CD4-positive, alpha-beta T cell (primary cell): ENCODE measurements at regions of chr16 and their contacts with region 1.

Region 1: DNA sequence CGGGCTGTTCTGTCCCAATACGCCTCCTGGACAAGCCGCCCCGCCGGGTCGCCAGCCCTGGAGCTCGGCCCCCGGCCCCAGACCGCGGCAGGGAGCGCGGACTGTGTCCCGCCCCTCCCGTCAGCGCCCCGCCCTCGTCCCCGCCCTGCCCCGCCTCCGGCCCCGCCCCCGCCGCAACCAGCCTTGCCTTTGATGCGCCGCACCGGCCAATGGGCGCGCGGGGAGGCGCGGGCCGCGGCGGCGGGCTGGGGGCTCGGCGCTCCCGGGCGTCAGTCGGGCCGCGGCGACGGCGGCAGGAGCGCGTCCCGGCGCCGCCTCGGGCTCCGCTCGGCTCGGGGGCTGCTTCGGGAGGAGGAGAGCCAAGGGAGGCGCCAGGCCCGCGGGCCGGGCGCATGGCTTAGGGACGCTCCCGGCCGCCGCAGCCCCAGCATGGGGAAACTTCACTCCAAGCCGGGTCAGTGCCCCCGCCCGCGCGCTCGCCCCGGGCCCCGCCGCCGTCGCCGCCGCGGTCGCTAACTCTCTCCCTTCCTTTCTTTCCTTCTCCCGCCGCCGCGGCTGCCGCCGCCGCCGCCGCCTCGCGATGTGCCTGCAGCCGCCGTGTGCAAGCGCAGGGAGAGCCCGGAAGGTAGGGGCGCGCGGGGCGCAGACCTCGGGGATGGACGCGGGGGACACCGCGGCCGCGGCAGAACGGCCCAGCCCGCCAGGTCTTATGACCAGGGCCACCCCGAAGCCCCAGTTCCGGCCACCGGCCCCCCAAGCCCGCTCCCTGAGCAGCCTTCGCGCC is at the start of gene NKD1:
- DNase-seq: peak; percentile 56 to 89 (median 71)
- ATAC-seq: peak; percentile 66
- H3K4me3 ChIP-seq: peak within 1 kb of the TSS; percentile 75
- H3K4me3 Mint-ChIP-seq: peak within 1 kb of the TSS; percentile 93
- H3K27ac ChIP-seq: peak within 1 kb of the TSS in 1 of 2 donors; percentile 65
- H3K27ac Mint-ChIP-seq: peak within 1 kb of the TSS; percentile 88
- H3K4me1 ChIP-seq: peaks cover 39% of the 10 kb centered on the region
- H3K4me1 Mint-ChIP-seq: peaks cover 48% of the 10 kb centered on the region
- H3K27me3 ChIP-seq: no peaks in the 10 kb centered on the region
- H3K27me3 Mint-ChIP-seq: no peaks in the 10 kb centered on the region
- CTCF ChIP-seq: no peak
- total RNA-seq, gene NKD1: 6.1 to 9.8 TPM

Region 2: GRCh38 chr16:50065624-50066481 is 482.5 kb before region 1 on chr16 and contains the start of gene HEATR3:
- CTCF ChIA-PET with region 1: no interaction called
- POLR2A ChIA-PET with region 1: no interaction called
- intact Hi-C with region 1: loop called in 1 of 2 experiments (anchors 10 kb)
- DNase-seq: peak; percentile 89 to 98 (median 95)
- ATAC-seq: peak; percentile 83
- H3K4me3 ChIP-seq: peak within 1 kb of the TSS; percentile 69
- H3K4me3 Mint-ChIP-seq: peak within 1 kb of the TSS; percentile 99
- H3K27ac ChIP-seq: peak within 1 kb of the TSS; percentile 69 to 85
- H3K27ac Mint-ChIP-seq: peak within 1 kb of the TSS; percentile 83
- H3K4me1 ChIP-seq: peaks cover 25% of the 10 kb centered on the region
- H3K4me1 Mint-ChIP-seq: peaks cover 53% of the 10 kb centered on the region
- H3K27me3 ChIP-seq: no peaks in the 10 kb centered on the region
- H3K27me3 Mint-ChIP-seq: no peaks in the 10 kb centered on the region
- CTCF ChIP-seq: no peak
- total RNA-seq, gene HEATR3: 10.1 to 10.6 TPM

Region 3: GRCh38 chr16:50266337-50267091 is 281.8 kb before region 1 on chr16 and contains the start of gene ADCY7:
- CTCF ChIA-PET with region 1: no interaction called
- POLR2A ChIA-PET with region 1: no interaction called
- intact Hi-C with region 1: loop called in 1 of 2 experiments (anchors 5 kb)
- DNase-seq: peak; percentile 66 to 90 (median 86)
- ATAC-seq: peak; percentile 91
- H3K4me3 ChIP-seq: peak within 1 kb of the TSS; percentile 98
- H3K4me3 Mint-ChIP-seq: peak within 1 kb of the TSS; percentile 99
- H3K27ac ChIP-seq: peak within 1 kb of the TSS; percentile 87 to 97
- H3K27ac Mint-ChIP-seq: peak within 1 kb of the TSS; percentile 100
- H3K4me1 ChIP-seq: peaks cover 65% of the 10 kb centered on the region
- H3K4me1 Mint-ChIP-seq: peaks cover 73% of the 10 kb centered on the region
- H3K27me3 ChIP-seq: no peaks in the 10 kb centered on the region
- H3K27me3 Mint-ChIP-seq: no peaks in the 10 kb centered on the region
- CTCF ChIP-seq: no peak
- total RNA-seq, gene ADCY7: 136 to 147 TPM

Region 4: DNA sequence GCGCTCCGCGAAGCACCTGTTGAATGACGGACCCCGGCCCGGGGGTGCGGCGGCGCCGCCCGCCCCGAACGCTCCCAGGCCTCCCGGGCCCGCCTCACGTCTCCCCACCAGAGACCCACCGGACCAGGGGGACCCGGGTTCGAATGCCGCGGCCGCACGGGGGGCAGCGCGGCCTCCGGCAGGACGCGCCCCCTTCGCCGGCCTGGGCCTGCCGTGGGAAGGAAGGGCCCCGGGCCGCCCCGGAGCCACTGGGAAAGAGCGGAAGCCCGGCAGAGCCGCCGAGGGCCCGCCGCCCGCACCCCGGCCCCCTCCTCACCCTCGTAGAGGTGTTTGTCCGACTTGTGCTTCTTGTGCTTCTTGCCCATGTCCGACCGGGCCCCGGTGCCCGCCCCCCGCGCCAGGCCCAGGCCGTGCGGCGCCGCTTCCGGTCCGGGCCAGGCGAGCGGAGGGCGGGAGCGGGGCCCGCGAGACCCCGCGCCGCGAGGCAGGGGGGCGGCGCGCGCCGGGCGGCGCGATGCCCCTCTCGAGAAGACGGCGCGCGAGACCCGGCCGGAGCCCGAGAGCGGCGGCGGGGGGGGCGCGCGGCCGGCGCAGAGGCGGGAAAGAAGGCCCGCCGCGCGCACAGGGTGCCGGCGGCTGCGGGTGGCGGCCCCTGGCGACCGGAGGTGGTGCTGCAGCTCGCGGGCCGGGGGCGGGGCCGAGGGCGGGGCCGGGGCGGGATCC is 179.7 kb before region 1 on chr16 and contains the start of gene BRD7:
- CTCF ChIA-PET with region 1: interaction called, 3 read pairs
- POLR2A ChIA-PET with region 1: interaction called, 6 read pairs
- intact Hi-C with region 1: loop called in 1 of 2 experiments (anchors 2 kb)
- DNase-seq: peak; percentile 30 to 88 (median 70)
- ATAC-seq: peak; percentile 83
- H3K4me3 ChIP-seq: peak within 1 kb of the TSS; percentile 62
- H3K4me3 Mint-ChIP-seq: peak within 1 kb of the TSS; percentile 94
- H3K27ac ChIP-seq: peak within 1 kb of the TSS; percentile 15 to 52
- H3K27ac Mint-ChIP-seq: peak within 1 kb of the TSS; percentile 91
- H3K4me1 ChIP-seq: peaks cover 28% of the 10 kb centered on the region
- H3K4me1 Mint-ChIP-seq: peaks cover 58% of the 10 kb centered on the region
- H3K27me3 ChIP-seq: no peaks in the 10 kb centered on the region
- H3K27me3 Mint-ChIP-seq: no peaks in the 10 kb centered on the region
- CTCF ChIP-seq: no peak
- total RNA-seq, gene BRD7: 95.4 to 103 TPM

Region 5: GRCh38 chr16:50603206-50604064 is 55.1 kb after region 1 on chr16:
- CTCF ChIA-PET with region 1: interaction called, 3 read pairs
- POLR2A ChIA-PET with region 1: no interaction called
- intact Hi-C with region 1: loop called in 1 of 2 experiments (anchors 2 kb)
- DNase-seq: peak in 3 of 14 experiments; percentile 26 to 49 (median 34)
- ATAC-seq: no peak
- H3K4me3 ChIP-seq: no peak overlapping the region
- H3K4me3 Mint-ChIP-seq: peak overlapping the region; percentile 5
- H3K27ac ChIP-seq: peak overlapping the region in 1 of 2 donors; percentile 29
- H3K27ac Mint-ChIP-seq: peak overlapping the region; percentile 74
- H3K4me1 ChIP-seq: peaks cover 44% of the 10 kb centered on the region
- H3K4me1 Mint-ChIP-seq: peaks cover 52% of the 10 kb centered on the region
- H3K27me3 ChIP-seq: no peaks in the 10 kb centered on the region
- H3K27me3 Mint-ChIP-seq: no peaks in the 10 kb centered on the region
- CTCF ChIP-seq: no peak

Region 6: DNA sequence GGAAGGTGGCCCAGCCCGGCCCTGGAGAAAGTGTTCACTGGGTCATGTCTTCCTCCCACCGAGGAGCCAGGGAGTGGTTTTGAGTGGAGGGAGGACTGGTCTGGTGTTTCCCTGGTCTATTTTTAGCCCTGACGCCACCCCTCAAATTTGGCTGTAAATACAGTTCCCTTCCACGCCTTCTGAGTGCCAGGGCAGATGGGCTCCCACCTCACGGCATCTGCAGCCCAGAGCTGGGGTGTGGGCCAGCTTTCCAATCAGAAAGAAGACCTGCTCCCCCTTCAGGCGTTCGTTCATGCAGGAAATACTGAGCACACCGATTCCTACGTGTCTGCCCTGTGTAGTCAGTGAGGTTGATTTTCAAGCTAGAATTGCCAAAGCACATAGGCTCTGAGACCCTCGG is 79.1 kb after region 1 on chr16:
- CTCF ChIA-PET with region 1: no interaction called
- POLR2A ChIA-PET with region 1: no interaction called
- intact Hi-C with region 1: loop called (anchors 5 kb)
- DNase-seq: peak; percentile 23 to 78 (median 47)
- ATAC-seq: peak; percentile 85
- H3K4me3 ChIP-seq: peak overlapping the region; percentile 8
- H3K4me3 Mint-ChIP-seq: peak overlapping the region; percentile 83
- H3K27ac ChIP-seq: no peak overlapping the region
- H3K27ac Mint-ChIP-seq: peak overlapping the region; percentile 76
- H3K4me1 ChIP-seq: peaks cover 33% of the 10 kb centered on the region
- H3K4me1 Mint-ChIP-seq: peaks cover 44% of the 10 kb centered on the region
- H3K27me3 ChIP-seq: no peaks in the 10 kb centered on the region
- H3K27me3 Mint-ChIP-seq: no peaks in the 10 kb centered on the region
- CTCF ChIP-seq: peak; percentile 41